ENCODE measurements at regions of chr2 and their contacts with region 1.

Region 1: DNA sequence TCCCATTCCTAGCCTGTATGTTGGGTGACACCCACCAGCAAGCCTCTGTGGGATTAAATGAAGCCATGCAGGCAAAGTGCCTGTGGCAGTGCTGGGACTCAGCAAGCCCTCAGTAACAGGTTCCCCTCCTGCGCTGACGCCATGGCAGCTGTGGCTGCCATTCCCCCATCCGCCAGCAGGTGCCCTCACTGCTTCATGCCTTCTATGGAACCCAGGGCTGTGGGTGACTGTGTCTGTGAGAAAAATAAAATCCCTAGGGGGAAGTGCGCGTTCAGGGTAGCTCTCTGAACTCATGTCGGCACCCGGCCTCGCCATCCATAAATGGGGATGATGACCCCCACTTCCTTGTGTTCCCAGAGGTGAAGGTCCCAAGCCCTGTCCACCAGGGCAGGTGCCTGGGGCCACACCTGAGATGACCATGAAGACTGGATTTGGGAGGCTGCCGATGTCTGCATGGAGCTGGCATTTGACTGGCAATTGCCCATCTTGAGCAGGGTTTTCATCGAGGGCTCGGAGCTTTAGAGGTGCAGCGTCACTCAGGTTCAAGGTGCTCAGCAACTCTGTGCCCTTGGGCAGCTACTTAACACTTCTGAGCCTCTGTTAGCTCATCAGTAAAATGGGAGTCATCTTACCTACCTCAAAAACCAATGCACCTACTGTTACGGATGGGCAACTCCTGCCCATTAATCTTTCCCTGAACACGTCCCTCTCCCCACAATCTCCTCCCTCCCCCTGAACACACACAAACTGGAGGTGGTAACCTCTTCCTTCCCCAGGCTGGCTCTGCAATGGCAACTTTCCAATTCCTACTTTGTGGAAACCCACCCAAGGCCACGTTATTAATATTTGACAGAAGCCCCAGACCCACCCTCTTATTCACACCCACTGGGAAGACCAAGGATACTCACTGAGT is 2.9 kb upstream of the MAL start:
- DNase-seq: peak; percentile 92
- ATAC-seq: peak; percentile 69
- H3K4me3 Mint-ChIP-seq: no peak overlapping the region
- H3K27ac Mint-ChIP-seq: peak overlapping the region; percentile 13
- H3K4me1 Mint-ChIP-seq: peaks cover 42% of the 10 kb centered on the region
- H3K27me3 Mint-ChIP-seq: no peaks in the 10 kb centered on the region

Region 2: DNA sequence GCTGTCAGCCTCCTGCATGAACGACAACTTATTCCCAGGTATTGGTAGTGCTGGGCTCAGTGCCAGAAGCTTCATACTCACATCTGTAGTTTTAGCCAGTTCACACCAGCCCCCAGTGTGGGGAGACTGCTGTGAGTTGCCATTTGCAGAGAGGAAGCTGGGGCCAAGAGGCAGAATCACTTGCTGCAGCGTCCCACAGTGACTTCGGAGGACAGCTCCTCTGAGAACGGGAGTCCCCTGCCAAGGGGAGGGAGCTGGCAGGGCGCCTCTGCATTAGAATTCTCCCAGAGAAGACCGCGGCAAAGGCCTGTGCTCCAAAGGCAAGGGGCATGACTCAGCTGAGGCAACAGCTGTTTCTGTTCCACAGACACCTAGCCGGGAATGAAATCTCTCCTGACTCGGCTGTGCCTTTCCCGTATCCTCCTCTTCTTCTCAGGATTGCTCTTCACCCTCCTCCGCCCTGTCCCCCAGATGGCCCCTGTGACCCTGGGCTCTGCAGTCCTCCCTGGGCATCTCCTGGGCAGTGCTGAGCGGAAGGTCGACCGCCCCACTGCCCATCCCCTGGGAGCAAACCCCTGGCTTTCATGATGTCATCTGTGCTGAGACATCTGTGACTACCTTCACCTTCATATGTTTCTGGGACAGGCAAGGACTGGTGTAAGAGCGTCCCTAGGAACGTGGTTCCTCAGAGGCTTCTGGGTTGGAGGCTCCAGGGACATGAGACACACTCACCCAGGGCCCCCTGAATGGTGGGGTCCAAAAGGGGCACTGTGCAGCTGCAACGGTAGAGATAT is 20.9 kb after region 1 on chr2:
- CTCF ChIA-PET with region 1: interaction called, 53 read pairs
- POLR2A ChIA-PET with region 1: no interaction called
- intact Hi-C with region 1: loop called in 1 of 2 experiments (anchors 2 kb)
- DNase-seq: peak; percentile 81
- ATAC-seq: peak; percentile 73
- H3K4me3 Mint-ChIP-seq: no peak overlapping the region
- H3K27ac Mint-ChIP-seq: no peak overlapping the region
- H3K4me1 Mint-ChIP-seq: peaks cover 63% of the 10 kb centered on the region
- H3K27me3 Mint-ChIP-seq: no peaks in the 10 kb centered on the region

Region 3: DNA sequence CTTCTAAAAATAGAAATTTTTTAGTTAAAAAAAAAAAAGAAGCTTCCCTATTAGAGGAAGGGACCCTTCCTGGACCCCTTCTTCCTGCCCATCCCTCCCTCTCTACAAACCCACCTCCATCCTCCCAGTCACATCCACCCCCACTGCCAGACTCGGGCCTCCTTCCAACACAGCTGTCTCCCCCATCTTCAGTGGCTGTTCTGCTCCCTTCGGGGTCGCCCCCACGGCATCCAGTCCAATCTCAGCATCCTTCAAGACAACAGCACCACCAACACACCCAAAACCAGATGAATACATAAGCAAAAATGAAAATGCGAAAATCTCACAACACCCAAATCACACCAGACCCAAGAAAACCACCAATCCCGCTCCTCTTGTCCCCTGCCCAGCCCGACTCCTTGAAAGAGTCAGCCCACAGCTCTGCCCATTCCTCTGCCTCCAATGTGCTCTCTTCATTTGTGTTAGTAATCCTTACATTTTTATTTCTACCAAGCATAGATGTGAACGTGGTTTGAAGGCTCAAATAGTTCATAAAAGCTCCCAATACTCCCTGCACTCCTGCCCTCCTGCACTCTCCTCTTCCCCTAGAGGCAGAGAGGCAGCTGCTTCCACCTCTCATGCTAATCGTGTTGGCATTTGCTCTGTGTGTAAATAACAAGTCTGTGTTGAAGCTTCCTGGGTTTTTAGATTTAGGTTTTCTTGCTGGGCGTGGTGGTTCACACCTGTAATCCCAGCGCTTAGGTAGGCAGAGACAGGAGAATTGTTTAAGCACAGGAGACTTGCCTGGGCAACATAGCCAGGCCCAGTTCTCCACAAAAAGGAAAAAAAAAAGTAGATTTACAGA is 39.9 kb after region 1 on chr2:
- CTCF ChIA-PET with region 1: interaction called, 89 read pairs
- POLR2A ChIA-PET with region 1: no interaction called
- intact Hi-C with region 1: no loop called
- DNase-seq: no peak
- ATAC-seq: peak; percentile 24
- H3K4me3 Mint-ChIP-seq: no peak overlapping the region
- H3K27ac Mint-ChIP-seq: peak overlapping the region; percentile 74
- H3K4me1 Mint-ChIP-seq: peaks cover 27% of the 10 kb centered on the region
- H3K27me3 Mint-ChIP-seq: no peaks in the 10 kb centered on the region

Region 4: DNA sequence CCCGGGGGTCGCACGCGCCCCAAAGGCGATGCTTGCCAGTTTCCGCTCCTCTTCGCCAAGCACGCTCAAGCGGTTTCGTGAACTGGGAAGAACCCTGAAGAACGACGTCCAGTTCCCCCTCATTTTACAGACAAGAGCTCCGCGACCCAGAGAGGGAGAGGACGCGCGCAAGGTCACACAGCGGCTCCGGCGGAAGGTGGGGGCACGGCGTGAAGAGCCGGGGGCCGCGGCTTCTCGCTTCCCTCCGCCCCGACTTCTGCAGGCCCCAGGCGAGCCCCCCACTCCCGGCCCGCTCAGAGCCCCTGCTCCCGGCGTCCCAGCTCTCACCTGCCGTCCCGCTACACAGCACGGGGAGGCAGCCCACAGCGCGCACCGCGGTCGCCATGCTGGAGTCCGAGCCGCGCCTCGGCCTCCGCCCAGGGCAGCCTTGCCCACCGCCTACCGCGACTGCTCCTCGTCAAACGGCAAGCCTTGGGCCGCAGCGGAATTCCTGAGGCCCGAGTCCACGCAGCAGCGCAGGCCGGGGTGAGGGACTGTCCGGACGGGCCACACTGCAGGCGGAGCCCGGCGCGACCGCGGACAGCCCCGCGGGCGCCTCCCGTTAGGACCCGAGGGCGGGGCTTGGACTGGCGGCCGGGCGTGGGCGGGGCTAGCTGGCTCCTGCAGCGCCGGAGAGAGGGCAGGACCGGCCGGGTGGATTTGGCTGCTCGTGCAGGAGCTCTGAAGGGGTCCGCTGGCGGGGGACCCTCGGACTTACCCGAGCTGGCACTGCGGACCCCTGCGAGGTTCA is 99.0 kb after region 1 on chr2 and contains the start of gene MRPS5:
- CTCF ChIA-PET with region 1: interaction called, 114 read pairs
- POLR2A ChIA-PET with region 1: no interaction called
- intact Hi-C with region 1: no loop called
- DNase-seq: peak; percentile 93
- ATAC-seq: peak; percentile 89
- H3K4me3 Mint-ChIP-seq: peak within 1 kb of the TSS; percentile 97
- H3K27ac Mint-ChIP-seq: peak within 1 kb of the TSS; percentile 94
- H3K4me1 Mint-ChIP-seq: peaks cover 37% of the 10 kb centered on the region
- H3K27me3 Mint-ChIP-seq: no peaks in the 10 kb centered on the region
- total RNA-seq, gene MRPS5: 90.7 to 97.1 TPM

Region 5: DNA sequence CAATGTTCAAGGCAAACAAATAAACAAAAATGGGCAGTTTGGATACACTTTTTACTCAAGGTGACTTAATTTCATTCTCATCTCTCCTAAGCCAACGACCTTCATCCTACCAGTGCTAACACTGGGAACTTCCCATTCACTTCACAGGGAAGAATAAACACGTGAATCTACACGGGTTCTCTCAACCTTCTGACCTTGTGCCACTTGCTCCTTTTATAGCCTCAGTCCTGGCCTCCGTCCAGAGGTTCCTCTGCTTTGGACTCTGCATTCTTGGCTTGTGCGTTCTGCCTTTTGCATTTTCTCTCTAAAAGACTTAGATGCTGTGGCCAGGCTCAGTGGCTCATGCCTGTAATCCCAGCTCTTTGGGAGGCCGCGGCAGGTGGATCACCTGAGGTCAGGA is 156.9 kb after region 1 on chr2:
- CTCF ChIA-PET with region 1: no interaction called
- POLR2A ChIA-PET with region 1: no interaction called
- intact Hi-C with region 1: no loop called
- DNase-seq: no peak
- ATAC-seq: no peak
- H3K4me3 Mint-ChIP-seq: no peak overlapping the region
- H3K27ac Mint-ChIP-seq: no peak overlapping the region
- H3K4me1 Mint-ChIP-seq: no peaks in the 10 kb centered on the region
- H3K27me3 Mint-ChIP-seq: no peaks in the 10 kb centered on the region

Region 6: DNA sequence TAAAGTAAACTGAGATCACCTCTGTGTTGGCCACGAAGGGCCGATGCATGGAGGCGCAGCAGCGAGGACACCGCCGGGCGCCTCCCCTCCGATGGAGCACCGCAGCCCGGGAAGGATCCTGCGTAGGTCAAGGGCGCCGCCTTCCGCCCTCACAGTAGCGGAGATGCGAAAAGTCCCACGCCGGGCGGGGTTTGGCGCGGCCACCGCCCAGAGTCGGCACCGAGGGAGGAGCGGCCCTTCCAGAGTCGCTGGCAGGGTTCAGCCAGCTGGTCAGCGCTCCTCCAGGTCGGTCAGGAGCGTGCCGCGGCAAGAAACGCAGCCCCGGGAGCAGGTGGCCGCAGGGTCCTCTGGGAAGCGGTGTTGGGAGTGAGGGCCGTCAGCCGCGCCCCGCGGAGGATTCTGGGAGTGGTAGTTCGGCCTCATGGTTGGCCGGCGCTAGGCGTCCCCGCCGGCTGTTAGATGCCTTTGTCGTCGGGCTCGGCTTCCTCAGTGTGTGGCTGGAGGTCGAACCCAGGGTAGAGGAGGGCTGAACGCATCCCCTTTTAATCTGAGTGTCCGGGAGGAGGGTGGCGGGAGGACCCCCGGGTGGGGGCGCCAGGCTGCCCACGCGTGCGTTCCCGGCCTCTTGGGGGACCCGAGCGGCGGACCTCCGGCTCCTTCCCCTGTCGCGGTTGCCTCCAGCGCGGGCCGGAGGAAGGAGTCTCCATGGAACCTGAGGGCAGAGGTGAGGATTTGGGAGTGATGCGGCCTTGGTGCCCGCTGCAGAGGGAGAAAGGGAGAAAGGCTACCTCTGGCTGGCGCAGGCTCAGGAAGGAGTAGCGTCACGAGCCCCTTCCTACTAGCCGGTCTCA is 184.8 kb after region 1 on chr2 and contains the start of gene ZNF892:
- CTCF ChIA-PET with region 1: no interaction called
- POLR2A ChIA-PET with region 1: no interaction called
- intact Hi-C with region 1: loop called (anchors 1 to 2 kb)
- DNase-seq: peak; percentile 91
- ATAC-seq: peak; percentile 98
- H3K4me3 Mint-ChIP-seq: peak within 1 kb of the TSS; percentile 87
- H3K27ac Mint-ChIP-seq: peak within 1 kb of the TSS; percentile 68
- H3K4me1 Mint-ChIP-seq: peaks cover 17% of the 10 kb centered on the region
- H3K27me3 Mint-ChIP-seq: no peaks in the 10 kb centered on the region
- total RNA-seq, gene ZNF892: 3.2 to 3.8 TPM

Region 7: DNA sequence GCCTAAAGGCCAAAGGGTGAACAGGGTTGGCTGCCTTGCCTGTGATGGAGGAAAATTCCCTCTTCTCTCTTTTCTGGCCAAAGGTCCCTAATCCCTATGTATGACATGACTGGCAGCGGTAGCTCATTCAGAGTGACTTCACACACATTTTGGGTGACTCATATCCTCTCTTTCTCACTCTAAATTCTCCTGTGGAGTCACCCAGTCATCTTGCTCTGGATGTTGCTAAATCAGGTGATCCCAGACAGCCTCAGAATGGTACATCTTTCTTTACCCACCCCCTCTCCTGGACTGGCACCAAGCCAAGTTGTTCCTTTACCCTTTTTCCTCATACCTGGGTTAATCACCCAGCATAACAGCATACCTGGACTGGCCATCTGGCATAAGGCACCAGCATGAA is 1405.4 kb after region 1 on chr2:
- CTCF ChIA-PET with region 1: no interaction called
- POLR2A ChIA-PET with region 1: no interaction called
- intact Hi-C with region 1: no loop called
- DNase-seq: peak; percentile 58
- ATAC-seq: peak; percentile 100
- H3K4me3 Mint-ChIP-seq: no peak overlapping the region
- H3K27ac Mint-ChIP-seq: peak overlapping the region; percentile 64
- H3K4me1 Mint-ChIP-seq: peaks cover 10% of the 10 kb centered on the region
- H3K27me3 Mint-ChIP-seq: peaks cover 7% of the 10 kb centered on the region